Body of pancreas (tissue), 4 donors: ENCODE measurements at regions of chr15 and their contacts with region 1.

Region 1: GRCh38 chr15:38389924-38390542 is 63.9 kb upstream of the FAM98B start:
- DNase-seq: peak; percentile 71 to 84 (median 78)
- ATAC-seq: peak; percentile 80
- H3K4me3 ChIP-seq: no peak overlapping the region
- H3K27ac ChIP-seq: no peak overlapping the region
- H3K4me1 ChIP-seq: no peaks in the 10 kb centered on the region
- H3K27me3 ChIP-seq: no peaks in the 10 kb centered on the region
- CTCF ChIP-seq: peak; percentile 65 to 85 (median 74)
- POLR2A ChIP-seq: no peak

Region 2: DNA sequence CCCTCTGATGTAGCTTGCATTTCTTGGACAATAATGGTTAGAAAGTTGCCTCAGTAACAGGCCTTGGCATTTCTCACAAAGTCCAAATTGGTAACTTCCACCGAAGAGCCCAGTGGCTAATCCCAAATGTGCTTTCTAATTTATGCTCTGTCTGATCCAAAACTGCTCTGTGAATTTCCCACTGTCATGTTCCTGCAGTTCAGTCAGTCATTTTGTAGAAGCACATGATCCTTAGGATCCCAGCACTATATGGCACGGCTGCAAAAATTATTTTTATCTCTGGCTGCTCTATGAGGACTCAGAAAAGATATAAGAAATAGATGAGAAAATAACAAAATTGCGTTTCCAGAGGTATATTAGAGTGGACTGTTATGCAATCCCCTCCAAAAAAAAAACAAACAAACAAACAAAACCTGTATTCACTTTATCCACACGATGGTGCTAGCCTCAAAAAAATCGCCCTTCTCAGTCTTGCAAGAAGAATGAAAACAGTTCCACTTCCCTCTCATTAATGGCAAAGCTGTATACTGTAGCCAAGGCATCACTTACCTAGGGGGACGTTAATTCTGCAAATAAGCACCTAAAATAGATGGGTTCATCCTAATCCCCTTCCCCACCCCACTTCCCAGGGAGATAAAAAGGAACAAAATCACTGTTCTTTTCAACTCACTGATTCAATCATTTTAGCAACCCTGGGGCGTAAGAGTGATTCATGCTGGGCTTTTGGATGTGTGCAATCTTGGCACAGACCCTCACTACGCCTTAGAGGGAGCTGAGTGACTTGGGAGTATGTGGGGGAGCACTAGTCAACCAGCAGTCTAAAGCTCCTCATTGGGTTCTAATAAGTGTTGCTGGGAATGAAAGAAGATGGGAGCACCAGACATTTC is 394.3 kb before region 1 on chr15:
- intact Hi-C with region 1: loop called (anchors 10 kb)
- DNase-seq: peak in 2 of 4 donors; percentile 32 to 39
- ATAC-seq: peak; percentile 33
- H3K4me3 ChIP-seq: no peak overlapping the region
- H3K27ac ChIP-seq: no peak overlapping the region
- H3K4me1 ChIP-seq: no peaks in the 10 kb centered on the region
- H3K27me3 ChIP-seq: no peaks in the 10 kb centered on the region
- CTCF ChIP-seq: peak in 6 of 7 experiments; percentile 29 to 81 (median 56)
- POLR2A ChIP-seq: no peak